ENCODE measurements at regions of chr1 and their contacts with region 1.

Region 1: GRCh38 chr1:78045926-78046778 is at the start of gene GIPC2:
- DNase-seq: peak; percentile 69
- ATAC-seq: peak; percentile 49
- total RNA-seq, gene GIPC2: 2.5 TPM

Region 2: DNA sequence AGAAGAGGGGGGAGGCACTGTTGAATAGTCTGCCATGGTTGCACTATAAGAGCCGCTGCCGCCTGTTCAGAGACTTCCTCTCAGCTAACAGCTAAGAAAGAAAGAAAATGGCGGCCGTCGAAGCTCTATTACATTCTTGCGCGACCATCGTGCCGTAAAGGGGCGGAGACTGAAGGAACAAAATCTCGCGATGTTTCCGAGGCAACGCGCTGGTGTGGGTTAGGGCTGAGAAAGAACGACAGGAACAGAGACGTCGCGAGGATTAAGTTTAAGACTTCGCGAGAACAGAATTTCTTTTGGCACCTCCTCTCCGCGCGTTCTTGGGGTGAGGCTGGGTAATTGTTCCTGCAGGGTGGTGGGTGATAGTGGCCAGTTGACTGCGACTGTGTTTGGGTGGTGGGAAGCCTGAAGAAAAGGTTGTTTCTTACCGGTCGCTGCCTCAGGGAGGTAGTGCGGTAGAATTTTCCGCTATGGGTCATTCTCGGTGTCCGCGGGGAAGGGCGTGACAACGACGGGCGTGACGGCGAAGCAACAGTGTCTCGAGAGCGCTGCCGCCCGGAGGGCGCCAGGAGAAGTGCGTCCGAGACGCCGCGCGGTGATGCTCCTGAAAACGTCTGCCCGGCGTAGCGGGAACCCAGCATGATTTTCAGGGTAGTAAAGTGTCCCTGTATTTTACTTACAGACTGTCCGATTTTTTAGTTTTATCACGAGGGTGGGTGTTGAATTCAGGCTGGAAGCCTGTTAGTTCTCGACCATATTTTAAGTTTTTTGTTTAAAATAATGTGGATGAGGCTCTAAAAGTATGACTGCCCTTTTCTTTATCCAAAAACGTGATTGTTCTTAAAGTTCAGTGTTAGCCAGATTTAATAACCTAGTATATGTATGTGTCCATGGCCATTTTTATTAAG is 66.9 kb before region 1 on chr1 and contains the start of gene FUBP1:
- intact Hi-C with region 1: loop called (anchors 2 kb)
- DNase-seq: peak; percentile 95
- ATAC-seq: peak; percentile 92
- total RNA-seq, gene FUBP1: 48.9 TPM

Region 3: GRCh38 chr1:78004719-78005447 is 41.3 kb before region 1 on chr1 and contains the start of gene DNAJB4:
- intact Hi-C with region 1: loop called (anchors 1 kb)
- DNase-seq: no peak
- ATAC-seq: peak; percentile 100
- total RNA-seq, gene DNAJB4: 88.0 TPM

Region 4: DNA sequence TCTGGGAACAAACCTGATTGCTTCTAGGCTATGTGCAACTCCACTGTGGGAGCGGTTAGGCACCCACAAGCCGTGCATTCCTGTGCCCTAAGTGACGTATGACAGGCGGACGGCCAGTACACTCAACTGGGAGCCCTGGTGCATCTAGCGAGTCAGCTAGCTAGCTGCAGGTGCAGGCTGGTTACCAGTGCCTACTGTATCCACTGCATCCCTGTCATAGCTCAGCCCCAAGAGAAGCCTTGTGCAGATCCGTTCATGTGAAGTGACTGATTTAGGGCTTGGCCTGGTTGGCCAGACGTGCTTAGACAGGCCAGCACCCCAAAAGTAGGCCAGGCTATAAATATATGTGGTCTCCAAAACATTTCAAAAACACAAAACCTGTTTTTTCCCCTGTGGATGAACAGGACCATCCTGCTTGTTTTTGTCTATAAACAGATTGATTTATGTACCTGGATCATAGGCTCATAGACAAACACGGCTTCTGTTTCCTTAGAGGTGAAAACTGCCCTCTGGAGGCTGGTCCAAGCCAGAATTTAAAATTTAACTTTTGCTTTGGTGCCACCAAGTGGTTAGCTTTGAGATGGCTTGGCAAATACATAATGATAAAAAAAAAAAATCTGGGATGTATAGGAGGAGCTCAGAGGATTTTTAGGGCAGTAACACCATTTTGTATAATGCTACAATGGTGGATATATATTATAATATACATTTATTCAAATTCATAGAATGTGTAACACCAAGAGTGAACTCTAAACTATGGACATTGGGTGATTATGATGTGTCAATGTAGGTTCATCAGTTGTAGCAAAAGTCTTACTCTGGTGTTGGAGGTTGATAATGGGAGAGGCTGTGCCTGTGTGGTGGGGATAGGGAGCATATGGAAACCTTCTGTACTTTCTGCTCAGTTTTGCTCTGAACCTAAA is 68.1 kb after region 1 on chr1:
- intact Hi-C with region 1: loop called (anchors 5 kb)
- DNase-seq: no peak
- ATAC-seq: peak; percentile 75

Region 5: DNA sequence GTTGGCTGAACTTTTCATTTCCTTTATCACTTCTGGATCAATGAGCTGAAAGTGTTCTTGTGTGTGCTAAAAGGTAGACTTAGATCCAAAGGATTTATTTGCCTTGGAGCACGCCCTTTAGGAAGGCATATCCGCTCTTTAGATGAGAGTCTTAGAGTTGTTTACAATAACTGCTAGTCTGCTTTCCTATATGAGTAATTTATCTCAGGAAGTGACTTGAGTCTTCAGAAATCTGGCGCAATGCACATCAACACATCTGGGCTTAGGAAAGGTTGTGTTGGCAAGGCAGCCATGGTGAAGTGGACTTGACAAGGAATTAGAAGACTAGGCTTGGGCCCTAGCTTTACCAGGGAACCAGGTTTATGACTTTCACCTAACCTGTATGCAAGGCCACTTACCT is 240.5 kb after region 1 on chr1:
- intact Hi-C with region 1: no loop called
- DNase-seq: no peak
- ATAC-seq: no peak